ENCODE measurements at regions of chr10 and their contacts with region 1.

Region 1: GRCh38 chr10:35635576-35635975 is 6.5 kb downstream of the FZD8 start:
- DNase-seq: peak; percentile 20
- ATAC-seq: peak; percentile 92
- H3K4me3 ChIP-seq: no peak overlapping the region
- H3K27ac ChIP-seq: no peak overlapping the region
- H3K4me1 ChIP-seq: no peaks in the 10 kb centered on the region
- H3K27me3 ChIP-seq: peaks cover 0 to 5% of the 10 kb centered on the region in 2 experiments; a peak in 3 of 4 replicates
- CTCF ChIP-seq: peak; percentile 75 to 85 (median 81)
- EP300 ChIP-seq: no peak
- POLR2A ChIP-seq: no peak
- RAD21 ChIP-seq: peak; percentile 96

Region 2: GRCh38 chr10:36057180-36057579 is 421.6 kb after region 1 on chr10:
- CTCF ChIA-PET with region 1: no interaction called
- POLR2A ChIA-PET with region 1: no interaction called
- RAD21 ChIA-PET with region 1: no interaction called
- SMC1A ChIA-PET with region 1: no interaction called
- in situ Hi-C with region 1: no loop called
- intact Hi-C with region 1: no loop called
- DNase-seq: no peak
- ATAC-seq: no peak
- H3K4me3 ChIP-seq: no peak overlapping the region
- H3K27ac ChIP-seq: no peak overlapping the region
- H3K4me1 ChIP-seq: no peaks in the 10 kb centered on the region
- H3K27me3 ChIP-seq: no peaks in the 10 kb centered on the region
- CTCF ChIP-seq: no peak
- EP300 ChIP-seq: no peak
- POLR2A ChIP-seq: no peak
- RAD21 ChIP-seq: no peak

Region 3: GRCh38 chr10:36779234-36779846 is 1143.8 kb after region 1 on chr10:
- CTCF ChIA-PET with region 1: no interaction called
- POLR2A ChIA-PET with region 1: no interaction called
- RAD21 ChIA-PET with region 1: interaction called, 3 read pairs
- SMC1A ChIA-PET with region 1: interaction called, 3 read pairs
- in situ Hi-C with region 1: no loop called
- intact Hi-C with region 1: loop called (anchors 10 kb)
- DNase-seq: no peak
- ATAC-seq: no peak
- H3K4me3 ChIP-seq: no peak overlapping the region
- H3K27ac ChIP-seq: no peak overlapping the region
- H3K4me1 ChIP-seq: no peaks in the 10 kb centered on the region
- H3K27me3 ChIP-seq: no peaks in the 10 kb centered on the region
- CTCF ChIP-seq: peak in 1 of 3 experiments; percentile 22; a peak in 1 of 6 replicates
- EP300 ChIP-seq: no peak
- POLR2A ChIP-seq: no peak
- RAD21 ChIP-seq: 0 out of 2 replicates have a peak, but pooled peaks have one; percentile 18

Region 4: DNA sequence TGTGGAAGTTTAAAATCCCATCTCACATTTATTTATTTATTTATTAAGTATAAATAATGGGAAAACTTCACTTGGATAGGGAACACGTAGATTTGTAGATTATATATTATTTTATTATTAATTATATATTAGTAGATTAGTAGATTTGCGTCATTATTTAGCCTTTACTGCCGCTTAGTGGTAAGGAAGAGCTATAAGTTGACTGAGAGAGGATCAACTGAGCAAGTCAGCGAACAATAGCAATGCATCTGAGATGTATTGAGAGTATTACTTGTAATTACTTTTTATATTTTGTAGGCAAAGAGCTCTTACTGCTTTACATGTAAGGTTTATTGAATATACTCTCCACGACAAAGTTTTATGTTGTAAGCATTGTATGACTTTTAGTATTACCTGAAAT is 1245.3 kb after region 1 on chr10:
- CTCF ChIA-PET with region 1: interaction called, 59 read pairs
- POLR2A ChIA-PET with region 1: no interaction called
- RAD21 ChIA-PET with region 1: interaction called, 15 read pairs
- SMC1A ChIA-PET with region 1: interaction called, 33 read pairs
- in situ Hi-C with region 1: loop called (anchors 5 kb)
- intact Hi-C with region 1: loop called (anchors 2 kb)
- DNase-seq: no peak
- ATAC-seq: 0 out of 3 replicates have a peak, but pooled peaks have one; percentile 48
- H3K4me3 ChIP-seq: no peak overlapping the region
- H3K27ac ChIP-seq: no peak overlapping the region
- H3K4me1 ChIP-seq: no peaks in the 10 kb centered on the region
- H3K27me3 ChIP-seq: no peaks in the 10 kb centered on the region
- CTCF ChIP-seq: peak; percentile 39 to 54 (median 45); a peak in 5 of 6 replicates
- EP300 ChIP-seq: no peak
- POLR2A ChIP-seq: no peak
- RAD21 ChIP-seq: peak; percentile 64

Measured in GM12878 (cell line).